Mammary epithelial cell (primary cell): ENCODE measurements at regions of chr20 and their contacts with region 1.

Region 1: GRCh38 chr20:9616833-9617489 is 102.6 kb downstream of the LAMP5 start:
- DNase-seq: peak; percentile 38
- H3K4me3 ChIP-seq: no peak overlapping the region
- H3K27ac ChIP-seq: no peak overlapping the region
- H3K4me1 ChIP-seq: no peaks in the 10 kb centered on the region
- H3K27me3 ChIP-seq: peaks cover 2% of the 10 kb centered on the region
- CTCF ChIP-seq: peak; percentile 76 to 81

Region 2: DNA sequence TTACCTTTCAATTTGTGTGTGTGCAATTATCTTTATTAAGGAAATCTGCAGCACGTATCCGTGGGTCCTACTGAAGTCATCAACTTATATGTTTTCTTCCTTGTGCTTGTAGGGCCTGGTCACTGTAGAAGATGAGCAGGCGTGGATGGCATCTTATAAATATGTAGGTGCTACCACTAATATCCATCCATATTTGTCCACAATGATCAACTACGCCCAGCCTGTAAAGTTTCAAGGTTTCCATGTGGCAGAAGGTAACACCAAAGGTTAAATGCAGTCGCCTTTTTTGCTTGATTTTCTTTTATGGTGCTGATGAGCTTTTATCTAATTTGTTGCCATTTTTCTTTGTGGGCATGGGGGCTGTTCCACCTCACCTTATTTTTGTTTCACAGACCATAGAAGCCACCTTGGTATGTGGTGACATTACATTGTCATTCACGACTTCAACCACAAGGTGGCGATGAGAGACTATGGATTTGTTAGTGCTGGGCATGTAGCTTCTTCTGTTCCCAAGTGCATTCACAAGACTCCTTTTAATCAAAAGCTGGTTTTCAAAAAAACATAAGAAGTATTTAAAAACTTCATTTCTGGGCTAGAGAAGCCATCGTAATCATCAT is 209.0 kb before region 1 on chr20:
- CTCF ChIA-PET with region 1: no interaction called
- dilution Hi-C with region 1: loop called (anchors 25 kb)
- in situ Hi-C with region 1: no loop called
- intact Hi-C with region 1: no loop called
- DNase-seq: peak; percentile 53
- H3K4me3 ChIP-seq: no peak overlapping the region
- H3K27ac ChIP-seq: no peak overlapping the region
- H3K4me1 ChIP-seq: peaks cover 9% of the 10 kb centered on the region
- H3K27me3 ChIP-seq: no peaks in the 10 kb centered on the region
- CTCF ChIP-seq: peak; percentile 71 to 80

Region 3: GRCh38 chr20:9884061-9884460 is 267.1 kb after region 1 on chr20:
- CTCF ChIA-PET with region 1: no interaction called
- dilution Hi-C with region 1: no loop called
- in situ Hi-C with region 1: loop called in 1 of 2 experiments (anchors 10 kb)
- intact Hi-C with region 1: loop called (anchors 1 kb)
- DNase-seq: no peak
- H3K4me3 ChIP-seq: no peak overlapping the region
- H3K27ac ChIP-seq: no peak overlapping the region
- H3K4me1 ChIP-seq: no peaks in the 10 kb centered on the region
- H3K27me3 ChIP-seq: no peaks in the 10 kb centered on the region
- CTCF ChIP-seq: peak; percentile 8 to 61

Region 4: GRCh38 chr20:9912858-9913434 is 296.0 kb after region 1 on chr20:
- CTCF ChIA-PET with region 1: interaction called, 4 read pairs
- dilution Hi-C with region 1: no loop called
- in situ Hi-C with region 1: loop called in 1 of 2 experiments (anchors 25 kb)
- intact Hi-C with region 1: loop called (anchors 1 kb)
- DNase-seq: peak; percentile 50
- H3K4me3 ChIP-seq: no peak overlapping the region
- H3K27ac ChIP-seq: no peak overlapping the region
- H3K4me1 ChIP-seq: no peaks in the 10 kb centered on the region
- H3K27me3 ChIP-seq: no peaks in the 10 kb centered on the region
- CTCF ChIP-seq: peak; percentile 80 to 95

Region 5: DNA sequence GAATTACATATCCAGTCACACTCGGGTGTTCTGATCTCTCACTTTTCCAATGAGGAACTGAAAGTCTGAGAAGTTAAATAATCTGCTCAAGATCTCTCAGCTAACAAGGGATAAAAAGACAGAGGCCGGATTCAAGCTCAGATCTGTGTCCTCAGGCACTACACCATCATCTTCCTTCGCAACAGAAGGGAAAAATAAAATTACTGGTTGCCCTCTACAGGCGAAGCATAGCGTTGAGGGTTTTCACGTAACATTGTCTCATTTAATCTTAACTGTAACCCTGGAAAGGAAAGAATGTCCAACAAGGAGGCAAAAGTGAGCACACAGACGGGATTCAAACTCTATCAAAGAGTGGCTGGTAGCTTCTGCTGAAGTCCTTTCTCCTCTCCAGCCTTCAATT is 350.0 kb after region 1 on chr20:
- CTCF ChIA-PET with region 1: no interaction called
- dilution Hi-C with region 1: no loop called
- in situ Hi-C with region 1: loop called in 1 of 2 experiments (anchors 10 kb)
- intact Hi-C with region 1: loop called (anchors 1 kb)
- DNase-seq: peak; percentile 12
- H3K4me3 ChIP-seq: no peak overlapping the region
- H3K27ac ChIP-seq: no peak overlapping the region
- H3K4me1 ChIP-seq: peaks cover 6% of the 10 kb centered on the region
- H3K27me3 ChIP-seq: no peaks in the 10 kb centered on the region
- CTCF ChIP-seq: peak; percentile 51 to 53

Region 6: GRCh38 chr20:10225439-10226060 is 608.6 kb after region 1 on chr20:
- CTCF ChIA-PET with region 1: no interaction called
- dilution Hi-C with region 1: no loop called
- in situ Hi-C with region 1: no loop called
- intact Hi-C with region 1: loop called (anchors 5 kb)
- DNase-seq: no peak
- H3K4me3 ChIP-seq: no peak overlapping the region
- H3K27ac ChIP-seq: no peak overlapping the region
- H3K4me1 ChIP-seq: peaks cover 5% of the 10 kb centered on the region
- H3K27me3 ChIP-seq: no peaks in the 10 kb centered on the region
- CTCF ChIP-seq: peak; percentile 14 to 20